Activated T-helper 1 cell treated with anti-CD3 and anti-CD28 coated beads, Interleukin-12 subunit alpha, Interleukin-12 subunit beta, Interleukin-2, Interleukin-4 antibody, amounts not matched to agents 30 ng/mL and 10 ng/mL and 1 ng/mL, durations not matched to agents 14 hours and 24 hours and 36 hours (primary cell): ENCODE measurements at regions of chr5 and their contacts with region 1.

Region 1: GRCh38 chr5:91170266-91170665 is 212.9 kb downstream of the ARRDC3 start:
- DNase-seq: no peak
- H3K4me3 Mint-ChIP-seq: no peak overlapping the region
- H3K27ac Mint-ChIP-seq: peak overlapping the region; percentile 24
- H3K4me1 Mint-ChIP-seq: peaks cover 17% of the 10 kb centered on the region
- H3K27me3 Mint-ChIP-seq: peaks cover 11% of the 10 kb centered on the region

Region 2: GRCh38 chr5:90940227-90940995 is 229.9 kb before region 1 on chr5:
- intact Hi-C with region 1: no loop called
- DNase-seq: peak; percentile 42
- H3K4me3 Mint-ChIP-seq: no peak overlapping the region
- H3K27ac Mint-ChIP-seq: peak overlapping the region; percentile 62
- H3K4me1 Mint-ChIP-seq: peaks cover 15% of the 10 kb centered on the region
- H3K27me3 Mint-ChIP-seq: no peaks in the 10 kb centered on the region

Region 3: DNA sequence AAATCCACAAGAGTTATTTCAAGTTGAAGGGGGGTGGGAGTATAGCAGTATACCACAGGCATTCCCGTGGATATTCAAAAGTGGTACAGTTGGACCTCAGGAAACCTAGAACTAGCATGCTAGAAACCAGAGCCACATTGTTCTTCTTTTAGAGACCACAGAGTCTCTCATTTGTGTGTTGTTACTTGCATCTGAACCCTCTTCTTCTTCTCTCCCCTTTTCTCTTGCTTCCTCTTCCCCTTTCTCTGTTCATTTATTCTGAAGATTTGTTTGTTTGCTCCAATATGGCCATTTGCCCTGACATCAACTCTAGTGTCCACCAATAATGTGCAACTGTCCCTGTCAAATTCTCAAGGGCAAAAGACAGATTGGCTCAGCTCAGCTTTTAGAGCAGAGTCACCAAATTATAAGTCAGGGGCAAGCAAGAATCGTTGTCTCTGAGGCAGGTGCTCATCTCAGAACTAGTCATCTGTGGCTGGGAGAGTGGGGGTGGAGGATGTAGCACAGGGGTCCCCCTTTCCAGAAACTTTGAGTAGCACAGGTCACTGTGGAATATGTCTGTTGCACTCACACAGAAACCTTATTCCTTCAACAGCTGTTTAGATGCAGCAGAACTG is 108.2 kb before region 1 on chr5:
- intact Hi-C with region 1: no loop called
- DNase-seq: no peak
- H3K4me3 Mint-ChIP-seq: no peak overlapping the region
- H3K27ac Mint-ChIP-seq: no peak overlapping the region
- H3K4me1 Mint-ChIP-seq: peaks cover 19% of the 10 kb centered on the region
- H3K27me3 Mint-ChIP-seq: peaks cover 45% of the 10 kb centered on the region

Region 4: DNA sequence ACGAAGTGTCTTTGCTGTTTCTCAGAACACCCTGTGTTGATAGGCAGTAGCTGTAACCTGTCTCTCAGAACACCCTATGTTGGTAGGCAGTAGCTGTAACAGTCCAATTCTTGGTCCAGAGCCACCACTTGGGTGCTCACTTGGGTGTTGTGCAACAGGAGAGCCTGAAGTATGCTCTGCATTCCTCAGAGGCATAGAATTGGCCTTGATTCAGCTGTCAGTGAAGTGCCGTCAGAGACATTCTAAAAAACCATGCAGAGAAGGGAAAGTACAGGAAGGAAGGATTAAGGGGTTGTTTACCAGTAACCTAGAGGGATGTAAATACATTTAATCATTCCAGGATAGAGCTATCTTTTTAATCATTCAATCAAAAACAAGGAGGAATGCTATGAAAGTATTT is 18.3 kb before region 1 on chr5:
- intact Hi-C with region 1: loop called (anchors 1 kb)
- DNase-seq: no peak
- H3K4me3 Mint-ChIP-seq: no peak overlapping the region
- H3K27ac Mint-ChIP-seq: no peak overlapping the region
- H3K4me1 Mint-ChIP-seq: no peaks in the 10 kb centered on the region
- H3K27me3 Mint-ChIP-seq: peaks cover 12% of the 10 kb centered on the region

Region 5: DNA sequence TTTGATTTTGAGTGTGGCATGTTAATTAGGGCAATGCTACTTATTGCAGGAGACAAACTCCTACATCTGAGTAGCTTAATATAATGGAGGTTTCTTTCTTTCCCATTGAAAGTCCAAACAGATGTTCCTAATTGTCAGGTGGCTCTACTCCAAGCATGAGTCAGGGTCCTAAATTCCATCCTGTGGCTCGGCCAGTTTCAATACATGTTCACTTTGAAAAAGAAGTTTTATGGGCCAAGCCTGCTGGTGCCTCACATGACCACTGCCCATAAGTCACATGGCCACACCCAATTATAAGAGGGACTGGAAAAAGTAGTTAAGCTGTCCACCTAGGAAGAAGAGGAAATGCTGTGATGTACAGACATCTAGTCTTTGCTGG is 42.4 kb after region 1 on chr5:
- intact Hi-C with region 1: no loop called
- DNase-seq: no peak
- H3K4me3 Mint-ChIP-seq: no peak overlapping the region
- H3K27ac Mint-ChIP-seq: no peak overlapping the region
- H3K4me1 Mint-ChIP-seq: no peaks in the 10 kb centered on the region
- H3K27me3 Mint-ChIP-seq: peaks cover 11% of the 10 kb centered on the region